Natural killer cell (primary cell): ENCODE measurements at regions of chr6 and their contacts with region 1.

Region 1: DNA sequence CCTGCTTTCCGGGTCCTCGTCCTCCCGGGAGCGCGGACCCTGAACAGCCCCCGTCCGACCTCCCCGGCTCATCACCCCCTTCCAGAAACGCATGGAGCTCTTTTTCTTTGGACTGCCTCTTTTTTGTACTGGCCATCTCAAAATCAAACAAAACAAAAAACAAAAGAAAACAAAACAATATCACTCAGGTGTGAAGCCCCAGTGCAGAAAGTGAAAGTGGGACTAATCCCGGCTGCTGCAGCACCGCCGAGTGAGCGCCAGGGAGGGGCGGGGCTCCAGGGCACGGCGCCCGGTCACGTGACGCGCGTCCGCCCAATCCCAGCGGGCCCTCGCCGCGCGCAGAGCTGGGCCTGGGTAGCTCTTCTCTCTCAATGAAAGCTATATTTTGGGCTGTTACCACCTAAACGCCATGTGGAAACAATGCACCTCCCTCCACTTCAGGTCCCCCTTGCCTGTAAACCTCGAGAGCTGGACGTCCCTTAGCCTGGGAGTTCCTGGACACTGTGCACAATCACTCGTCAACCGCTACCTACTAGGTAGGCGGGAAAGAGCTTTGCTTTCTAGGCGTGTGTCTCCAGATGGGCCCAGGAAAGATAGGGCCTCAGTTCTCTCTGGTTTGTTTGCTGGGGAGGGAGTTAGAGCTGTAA is 93.7 kb upstream of the PRDM1 start:
- DNase-seq: peak; percentile 83 to 95
- ATAC-seq: peak; percentile 83 to 91 (median 90)
- H3K4me3 ChIP-seq: peak overlapping the region; percentile 88
- H3K4me3 Mint-ChIP-seq: peak overlapping the region; percentile 99
- H3K27ac ChIP-seq: peak overlapping the region; percentile 67
- H3K27ac Mint-ChIP-seq: peak overlapping the region; percentile 86 to 89
- H3K4me1 ChIP-seq: peaks cover 35% of the 10 kb centered on the region
- H3K4me1 Mint-ChIP-seq: peaks cover 33% of the 10 kb centered on the region in 2 donors
- H3K27me3 ChIP-seq: peaks cover 40% of the 10 kb centered on the region
- H3K27me3 Mint-ChIP-seq: peaks cover 53 to 66% of the 10 kb centered on the region in 2 donors
- CTCF ChIP-seq: no peak

Region 2: GRCh38 chr6:106519460-106520394 is 527.3 kb after region 1 on chr6:
- intact Hi-C with region 1: loop called (anchors 10 kb)
- DNase-seq: peak; percentile 66 to 90
- ATAC-seq: peak; percentile 52 to 78 (median 72)
- H3K4me3 ChIP-seq: peak overlapping the region; percentile 56
- H3K4me3 Mint-ChIP-seq: peak overlapping the region; percentile 94
- H3K27ac ChIP-seq: peak overlapping the region; percentile 93
- H3K27ac Mint-ChIP-seq: peak overlapping the region; percentile 91 to 95
- H3K4me1 ChIP-seq: peaks cover 58% of the 10 kb centered on the region
- H3K4me1 Mint-ChIP-seq: peaks cover 51 to 76% of the 10 kb centered on the region in 2 donors
- H3K27me3 ChIP-seq: no peaks in the 10 kb centered on the region
- H3K27me3 Mint-ChIP-seq: no peaks in the 10 kb centered on the region
- CTCF ChIP-seq: no peak

Region 3: GRCh38 chr6:106637717-106638341 is 645.4 kb after region 1 on chr6:
- intact Hi-C with region 1: no loop called
- DNase-seq: no peak
- ATAC-seq: no peak
- H3K4me3 ChIP-seq: no peak overlapping the region
- H3K4me3 Mint-ChIP-seq: no peak overlapping the region
- H3K27ac ChIP-seq: peak overlapping the region; percentile 36
- H3K27ac Mint-ChIP-seq: no peak overlapping the region
- H3K4me1 ChIP-seq: peaks cover 12% of the 10 kb centered on the region
- H3K4me1 Mint-ChIP-seq: peaks cover 19 to 27% of the 10 kb centered on the region in 2 donors
- H3K27me3 ChIP-seq: no peaks in the 10 kb centered on the region
- H3K27me3 Mint-ChIP-seq: no peaks in the 10 kb centered on the region
- CTCF ChIP-seq: no peak